Left colon (tissue), 2 donors: ENCODE measurements at regions of chr4 and their contacts with region 1.

Region 1: DNA sequence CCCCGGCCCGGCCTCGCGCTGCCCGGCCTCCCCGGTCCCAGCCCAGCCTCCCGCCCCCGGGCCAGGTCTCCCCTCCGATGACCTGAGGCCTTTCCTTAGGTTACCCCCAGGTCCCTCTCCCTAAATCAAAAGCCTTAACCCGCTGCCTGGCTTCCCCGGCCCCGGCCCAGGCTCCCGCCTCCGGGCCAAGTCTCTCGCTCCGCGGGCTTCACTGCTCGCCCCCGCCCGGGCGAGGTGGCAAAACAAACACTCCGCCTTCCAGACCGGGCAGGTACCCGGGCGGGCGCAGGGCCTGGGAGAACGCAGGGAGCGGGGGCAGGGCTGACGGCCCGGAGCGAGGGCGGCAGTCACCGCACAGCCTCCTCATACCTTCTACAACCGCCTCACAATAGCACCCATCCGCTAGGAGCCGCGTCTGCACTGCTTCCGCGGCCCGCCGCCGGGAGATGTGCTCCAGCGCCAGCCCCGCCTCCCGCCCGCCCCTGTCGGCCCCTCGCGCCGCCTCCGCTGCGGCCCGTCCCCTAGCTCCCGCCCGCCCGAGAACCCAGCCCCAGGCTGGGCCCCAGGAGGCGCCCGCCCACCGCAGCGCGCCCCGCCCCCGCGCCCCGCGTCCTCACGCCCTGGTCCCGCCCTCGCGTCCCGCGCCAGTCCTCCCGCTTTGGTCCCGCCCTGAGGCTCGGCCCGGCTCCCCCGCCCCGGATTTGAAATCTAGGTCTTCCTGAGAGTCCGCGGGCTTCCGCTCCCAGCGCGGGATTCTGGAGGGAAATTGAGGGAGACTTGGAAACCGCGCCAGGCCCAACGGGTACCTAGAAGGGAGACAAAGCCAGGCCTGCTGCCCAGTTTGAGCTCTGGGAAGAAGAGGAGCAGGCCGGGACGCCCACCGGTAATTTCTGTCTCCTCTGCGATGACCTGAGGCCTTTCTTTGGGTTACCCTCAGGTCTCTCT is at the starts of genes CASP3 and PRIMPOL:
- DNase-seq: peak; percentile 96 to 98
- ATAC-seq: peak; percentile 87
- total RNA-seq, gene CASP3: 43.4 to 50.2 TPM
- total RNA-seq, gene PRIMPOL: 13.1 to 23.4 TPM

Region 2: GRCh38 chr4:184298254-184298653 is 351.0 kb before region 1 on chr4:
- intact Hi-C with region 1: no loop called
- DNase-seq: peak in 1 of 2 donors; percentile 13
- ATAC-seq: no peak

Region 3: DNA sequence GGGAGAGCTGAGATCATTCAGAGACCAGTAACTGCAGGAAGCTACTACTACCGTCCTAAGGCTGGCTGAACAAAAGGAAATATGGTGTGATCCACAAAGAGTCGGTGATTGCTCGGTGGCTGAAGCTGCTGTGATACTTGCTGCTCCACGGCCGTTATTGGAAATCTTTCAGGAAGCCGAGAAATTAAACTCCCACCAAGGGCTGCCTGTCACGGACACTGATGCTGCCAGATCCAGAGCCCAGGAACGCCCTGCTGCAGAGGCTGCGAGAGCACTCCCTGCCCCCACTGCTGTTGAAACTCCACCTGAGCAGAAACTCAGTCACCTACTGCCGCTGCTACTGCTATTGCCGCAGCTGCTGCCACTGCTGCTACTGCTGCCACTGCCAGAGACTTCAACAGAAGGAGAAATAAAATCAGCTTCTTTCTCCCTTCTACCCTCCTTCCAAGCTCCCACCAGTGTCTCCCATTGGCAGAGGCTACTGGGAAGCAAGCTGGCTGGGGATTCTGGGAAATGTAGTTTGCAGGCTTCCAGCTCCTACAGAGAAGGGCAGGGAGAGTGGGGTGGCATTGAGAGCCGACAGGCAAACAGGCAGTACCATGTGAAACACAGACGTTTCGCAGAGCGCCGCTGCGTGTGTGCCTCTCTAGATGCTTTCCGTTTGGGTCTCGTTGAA is 305.7 kb before region 1 on chr4:
- intact Hi-C with region 1: no loop called
- DNase-seq: peak; percentile 82 to 87
- ATAC-seq: peak; percentile 59

Region 4: GRCh38 chr4:184474263-184475095 is 174.8 kb before region 1 on chr4 and contains the start of gene IRF2:
- intact Hi-C with region 1: no loop called
- DNase-seq: peak; percentile 98 to 99
- ATAC-seq: peak; percentile 79
- total RNA-seq, gene IRF2: 45.5 to 51.3 TPM

Region 5: DNA sequence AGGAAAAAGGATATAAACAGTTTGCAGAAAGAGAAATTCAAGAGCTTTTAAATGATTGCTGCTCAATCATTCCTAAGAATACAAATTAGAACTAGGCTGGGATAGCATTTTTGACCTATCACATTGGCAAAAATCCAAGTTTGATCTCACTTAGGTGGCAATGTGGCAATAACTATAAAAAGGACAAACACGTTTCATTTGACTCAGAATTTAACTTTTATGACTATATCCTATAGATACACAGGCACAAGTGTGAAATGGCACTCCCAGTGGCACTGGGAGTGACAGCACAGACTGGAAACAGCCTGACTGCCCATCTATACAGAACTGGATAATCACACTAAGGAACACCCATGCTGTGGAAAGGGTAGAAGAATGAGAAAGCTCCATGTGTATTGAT is 73.5 kb after region 1 on chr4:
- intact Hi-C with region 1: loop called in 1 of 2 experiments (anchors 10 kb)
- DNase-seq: peak; percentile 26 to 54
- ATAC-seq: peak; percentile 100

Region 6: GRCh38 chr4:184896868-184897715 is 247.8 kb after region 1 on chr4:
- intact Hi-C with region 1: no loop called
- DNase-seq: no peak
- ATAC-seq: no peak